ENCODE measurements at regions of chr10 and their contacts with region 1.

Region 1: DNA sequence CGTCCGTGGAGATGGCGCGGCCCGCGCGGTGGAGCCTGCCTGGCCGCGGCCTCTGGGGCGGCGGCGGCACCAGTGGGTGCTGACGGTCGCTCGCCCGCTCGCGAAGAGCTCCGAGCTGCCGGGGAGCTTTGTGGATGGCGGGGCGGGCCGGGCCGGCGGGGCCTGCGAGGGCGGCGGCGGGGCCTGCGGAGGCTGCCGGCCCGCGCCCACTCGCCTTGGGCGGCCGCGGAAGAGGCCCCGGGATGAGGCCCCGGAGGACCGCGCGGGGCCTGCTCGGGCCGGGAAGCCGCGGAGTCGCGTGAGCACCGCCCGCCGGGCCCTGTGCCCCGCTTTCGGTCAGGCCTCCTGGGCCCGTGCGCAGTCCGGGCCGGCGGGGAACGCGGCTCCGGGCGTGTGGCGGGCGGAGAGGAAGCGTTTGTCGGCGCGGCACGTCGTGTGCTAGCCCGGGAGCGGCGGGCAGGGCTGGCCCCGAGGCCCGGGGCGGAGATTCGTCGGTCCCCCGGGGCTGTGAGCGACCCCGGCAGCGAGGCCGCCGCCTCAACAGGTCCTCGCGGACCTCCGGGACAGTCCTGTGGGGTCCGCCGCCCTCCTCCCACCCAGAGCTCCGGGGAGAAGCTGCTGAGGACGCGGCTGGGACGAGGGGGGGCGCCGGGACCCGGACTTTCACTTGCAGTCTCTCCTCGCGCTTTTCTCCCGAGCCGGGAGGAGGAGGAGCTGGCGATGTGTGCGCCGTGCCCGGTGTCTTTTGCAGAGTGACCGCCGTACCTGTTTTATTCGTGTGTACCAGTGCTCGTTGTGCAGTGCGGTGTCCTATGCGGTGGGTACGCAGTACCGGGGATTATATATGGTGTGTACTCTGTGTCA is 578 bp downstream of the ZMYND11 start:
- DNase-seq: peak; percentile 54 to 77 (median 68)
- ATAC-seq: peak; percentile 67
- H3K4me3 ChIP-seq: peak overlapping the region; percentile 67
- H3K4me3 Mint-ChIP-seq: peak overlapping the region; percentile 86 to 96 (median 94)
- H3K27ac ChIP-seq: peak overlapping the region; percentile 90
- H3K27ac Mint-ChIP-seq: peak overlapping the region; percentile 82 to 96 (median 93)
- H3K4me1 ChIP-seq: peaks cover 16 to 17% of the 10 kb centered on the region in 2 donors
- H3K4me1 Mint-ChIP-seq: peaks cover 27 to 59% (median 49%) of the 10 kb centered on the region in 7 donors
- H3K27me3 ChIP-seq: no peaks in the 10 kb centered on the region
- H3K27me3 Mint-ChIP-seq: peaks cover 0 to 15% (median 0%) of the 10 kb centered on the region in 5 donors

Region 2: DNA sequence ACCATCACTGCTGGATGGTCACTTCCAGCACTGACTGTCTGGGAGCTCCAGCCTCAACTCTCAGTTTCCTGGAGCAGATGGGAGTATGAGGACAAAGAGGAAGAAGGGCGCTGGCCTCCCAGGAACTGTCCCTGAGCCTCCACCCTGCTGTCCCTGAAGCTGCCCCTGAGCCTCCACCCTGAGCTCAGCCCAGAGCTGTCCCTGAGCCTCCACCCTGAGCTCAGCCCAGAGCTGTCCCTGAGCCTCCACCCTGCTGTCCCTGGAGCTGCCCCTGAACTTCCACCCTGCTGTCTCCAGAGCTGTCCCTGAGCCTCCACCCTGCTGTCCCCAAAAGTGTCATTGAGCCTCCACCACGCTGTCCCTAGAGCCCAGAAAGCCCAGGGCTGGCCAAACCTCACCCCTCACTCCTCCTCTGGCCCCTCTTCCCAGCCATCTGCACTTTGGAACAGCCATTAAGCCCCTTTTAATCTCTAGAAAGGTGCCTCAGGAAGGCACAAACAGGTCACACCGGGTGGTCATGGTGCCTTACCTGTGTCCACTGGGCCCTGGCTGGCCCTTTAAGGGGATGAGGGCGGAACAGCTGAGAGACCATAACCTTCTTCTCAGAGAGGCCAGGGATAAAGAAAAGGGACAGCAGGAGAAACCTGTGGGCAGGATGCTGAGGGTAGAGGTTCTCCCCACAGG is 56.2 kb before region 1 on chr10:
- CTCF ChIA-PET with region 1: no interaction called
- POLR2A ChIA-PET with region 1: no interaction called
- intact Hi-C with region 1: loop called in 1 of 2 experiments (anchors 2 kb)
- DNase-seq: no peak
- ATAC-seq: no peak
- H3K4me3 ChIP-seq: no peak overlapping the region
- H3K4me3 Mint-ChIP-seq: no peak overlapping the region
- H3K27ac ChIP-seq: no peak overlapping the region
- H3K27ac Mint-ChIP-seq: peak overlapping the region in 1 of 9 donors; percentile 70
- H3K4me1 ChIP-seq: no peaks in the 10 kb centered on the region
- H3K4me1 Mint-ChIP-seq: peaks cover 0 to 4% (median 0%) of the 10 kb centered on the region in 7 donors
- H3K27me3 ChIP-seq: no peaks in the 10 kb centered on the region
- H3K27me3 Mint-ChIP-seq: peaks cover 6 to 33% (median 15%) of the 10 kb centered on the region in 5 donors

Region 3: DNA sequence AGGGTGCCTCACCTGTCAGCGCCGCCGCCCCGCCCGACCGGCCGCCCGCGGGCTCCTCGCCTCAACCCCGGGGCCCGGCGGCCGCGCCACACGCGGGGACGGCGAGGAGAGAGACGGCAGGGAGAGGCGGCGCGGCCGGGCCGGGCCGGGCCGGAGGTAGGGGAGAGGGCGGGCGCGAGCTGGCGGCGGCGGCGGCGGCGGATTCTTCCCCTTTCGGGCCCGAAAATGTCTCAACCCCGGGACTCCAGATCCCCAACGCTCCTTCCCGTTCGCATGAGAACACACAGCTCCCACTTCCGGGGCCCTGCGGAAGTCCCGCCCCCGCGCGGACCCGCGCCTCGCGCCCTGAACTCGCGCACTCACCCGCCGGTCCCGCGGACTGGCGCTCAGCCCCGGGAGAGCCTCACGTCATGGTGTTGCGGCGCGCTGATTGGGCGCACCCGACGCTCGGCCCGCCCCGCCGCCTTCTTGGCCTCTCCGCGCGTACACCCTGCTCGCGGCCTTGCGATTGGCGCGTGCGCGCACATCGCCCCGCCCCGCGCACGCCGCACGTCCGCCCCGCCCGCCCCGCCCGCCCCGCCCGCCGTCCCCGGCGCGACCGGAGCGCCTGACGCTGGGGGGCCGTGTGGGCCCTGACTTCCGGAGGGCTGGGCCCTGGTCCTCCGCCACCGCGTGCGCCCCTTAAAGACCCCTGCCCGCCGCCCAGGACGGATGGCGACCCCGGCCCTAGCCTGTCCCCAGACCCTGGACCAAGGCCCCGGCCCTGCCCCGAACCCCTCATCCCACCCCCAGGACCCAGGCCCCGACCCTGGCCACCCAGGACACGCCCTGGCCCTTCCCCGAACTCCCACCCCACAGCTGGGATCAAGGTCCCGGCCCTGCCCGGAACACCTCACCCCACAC is 795.8 kb after region 1 on chr10 and contains the start of gene LARP4B:
- CTCF ChIA-PET with region 1: no interaction called
- POLR2A ChIA-PET with region 1: no interaction called
- intact Hi-C with region 1: loop called (anchors 2 to 5 kb)
- DNase-seq: peak; percentile 95 to 99 (median 98)
- ATAC-seq: peak; percentile 98
- H3K4me3 ChIP-seq: peak within 1 kb of the TSS; percentile 42
- H3K4me3 Mint-ChIP-seq: peak within 1 kb of the TSS; percentile 82 to 99 (median 94)
- H3K27ac ChIP-seq: peak within 1 kb of the TSS; percentile 96
- H3K27ac Mint-ChIP-seq: peak within 1 kb of the TSS; percentile 91 to 96 (median 94)
- H3K4me1 ChIP-seq: peaks cover 9 to 12% of the 10 kb centered on the region in 2 donors
- H3K4me1 Mint-ChIP-seq: peaks cover 26 to 48% (median 41%) of the 10 kb centered on the region in 7 donors
- H3K27me3 ChIP-seq: no peaks in the 10 kb centered on the region
- H3K27me3 Mint-ChIP-seq: no peaks in the 10 kb centered on the region
- total RNA-seq, gene LARP4B: 65.2 to 114 (median 96.9) TPM

Region 4: DNA sequence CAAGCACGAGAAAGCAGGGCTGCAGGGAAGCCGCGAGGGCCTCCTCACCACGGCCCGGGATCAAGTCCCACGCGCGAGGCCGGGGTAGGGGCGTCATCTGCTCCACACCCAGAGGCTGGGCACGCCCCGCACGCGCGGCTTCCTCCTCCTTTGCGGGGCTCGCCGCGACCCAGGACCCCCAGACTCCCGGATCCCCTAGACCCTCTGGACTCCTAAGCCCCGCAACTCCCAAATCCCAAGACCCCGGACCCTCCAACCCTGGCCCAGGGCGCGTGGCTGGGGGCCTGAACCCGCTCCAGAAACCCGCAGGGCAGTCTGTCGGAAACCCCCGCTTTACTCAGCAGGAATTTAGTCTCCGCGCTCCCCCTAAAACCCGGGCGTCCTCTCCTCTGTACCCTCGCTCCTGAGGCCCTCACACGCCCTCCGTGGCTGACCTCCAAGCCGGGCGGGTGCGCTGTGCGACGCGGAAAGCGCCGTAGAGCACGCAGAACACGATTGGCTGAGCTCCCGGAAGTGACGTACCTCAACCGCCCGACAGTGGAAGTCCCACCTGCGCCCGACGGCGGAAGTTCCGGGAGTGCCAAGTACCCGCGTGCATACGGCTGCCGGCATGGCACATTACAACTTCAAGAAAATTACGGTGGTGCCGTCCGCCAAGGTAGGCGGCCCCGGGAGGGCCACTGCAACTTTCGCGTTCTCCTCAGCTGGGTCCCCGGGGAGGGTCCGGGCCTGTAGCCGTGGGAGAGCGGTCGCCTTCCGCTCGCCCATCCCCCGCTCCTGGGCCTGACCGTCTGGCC is 852.2 kb after region 1 on chr10 and contains the start of gene GTPBP4:
- CTCF ChIA-PET with region 1: no interaction called
- POLR2A ChIA-PET with region 1: no interaction called
- intact Hi-C with region 1: loop called (anchors 2 to 5 kb)
- DNase-seq: peak; percentile 88 to 98 (median 95)
- ATAC-seq: peak; percentile 99
- H3K4me3 ChIP-seq: peak within 1 kb of the TSS; percentile 90
- H3K4me3 Mint-ChIP-seq: peak within 1 kb of the TSS; percentile 95 to 98 (median 96)
- H3K27ac ChIP-seq: peak within 1 kb of the TSS; percentile 95
- H3K27ac Mint-ChIP-seq: peak within 1 kb of the TSS; percentile 88 to 99 (median 97)
- H3K4me1 ChIP-seq: peaks cover 18 to 19% of the 10 kb centered on the region in 2 donors
- H3K4me1 Mint-ChIP-seq: peaks cover 21 to 45% (median 40%) of the 10 kb centered on the region in 7 donors
- H3K27me3 ChIP-seq: no peaks in the 10 kb centered on the region
- H3K27me3 Mint-ChIP-seq: no peaks in the 10 kb centered on the region
- total RNA-seq, gene GTPBP4: 39.0 to 81.8 (median 45.2) TPM